ENCODE measurements at regions of chr10 and their contacts with region 1.

Region 1: GRCh38 chr10:72254813-72255568 is 18.7 kb upstream of the DDIT4 start:
- DNase-seq: peak; percentile 80
- H3K4me3 ChIP-seq: peak overlapping the region; percentile 54
- H3K27ac ChIP-seq: no peak overlapping the region
- H3K4me1 ChIP-seq: peaks cover 18% of the 10 kb centered on the region
- H3K27me3 ChIP-seq: no peaks in the 10 kb centered on the region

Region 2: GRCh38 chr10:71512775-71513539 is 742.0 kb before region 1 on chr10:
- in situ Hi-C with region 1: no loop called
- DNase-seq: no peak
- H3K4me3 ChIP-seq: no peak overlapping the region
- H3K27ac ChIP-seq: no peak overlapping the region
- H3K4me1 ChIP-seq: no peaks in the 10 kb centered on the region
- H3K27me3 ChIP-seq: peaks cover 4% of the 10 kb centered on the region; the same call in 1 of the 2 replicates

Region 3: GRCh38 chr10:72328045-72328828 is 73.2 kb after region 1 on chr10:
- in situ Hi-C with region 1: loop called (anchors 5 kb)
- DNase-seq: peak; percentile 72
- H3K4me3 ChIP-seq: no peak overlapping the region
- H3K27ac ChIP-seq: no peak overlapping the region
- H3K4me1 ChIP-seq: peaks cover 12% of the 10 kb centered on the region; the same call in 1 of the 2 replicates
- H3K27me3 ChIP-seq: no peaks in the 10 kb centered on the region